ENCODE measurements at regions of chrX and their contacts with region 1.

Region 1: DNA sequence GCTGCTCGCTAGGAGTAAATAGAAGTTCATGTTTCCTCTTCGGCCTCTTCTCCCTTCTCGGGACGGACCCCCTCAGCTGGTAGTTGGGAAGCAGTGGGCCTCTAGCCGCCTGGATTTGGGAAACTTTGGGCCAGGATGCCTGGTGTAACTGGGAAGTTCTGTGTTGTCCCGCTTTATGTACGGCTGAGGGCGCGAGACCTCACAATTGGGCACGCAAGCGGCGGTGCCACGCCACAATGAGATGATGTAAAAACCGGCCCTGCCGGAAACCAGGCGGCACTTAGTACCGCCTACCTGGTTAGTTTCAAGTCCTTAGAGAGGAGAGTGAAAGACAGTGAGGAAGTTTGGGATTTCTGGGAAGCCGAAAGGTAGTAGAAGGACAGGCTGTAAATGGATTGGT is at the start of gene CT83:
- DNase-seq: no peak
- ATAC-seq: no peak
- total RNA-seq, gene CT83: not detected

Region 2: DNA sequence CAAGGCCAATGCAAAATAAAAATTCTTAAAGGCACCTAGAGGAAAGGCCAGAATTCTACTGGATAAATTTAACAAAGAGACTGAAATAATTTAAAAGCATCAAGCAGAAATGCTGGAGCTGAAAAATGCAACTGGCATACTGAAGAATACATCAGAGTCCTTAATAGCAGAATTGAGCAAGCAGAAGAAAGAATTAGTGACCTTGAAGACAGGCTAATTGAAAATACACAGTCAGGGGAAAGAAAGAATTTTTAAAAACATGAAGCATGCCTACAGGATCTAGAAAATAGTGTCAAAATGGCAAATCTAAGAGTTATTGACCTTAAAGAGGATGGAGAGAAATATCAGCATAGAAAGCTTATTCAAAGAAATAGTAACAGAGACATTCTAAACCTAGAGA is 1282.1 kb after region 1 on chrX:
- intact Hi-C with region 1: loop called (anchors 5 kb)
- DNase-seq: no peak
- ATAC-seq: no peak